T47D (cell line): ENCODE measurements at regions of chr17 and their contacts with region 1.

Region 1: DNA sequence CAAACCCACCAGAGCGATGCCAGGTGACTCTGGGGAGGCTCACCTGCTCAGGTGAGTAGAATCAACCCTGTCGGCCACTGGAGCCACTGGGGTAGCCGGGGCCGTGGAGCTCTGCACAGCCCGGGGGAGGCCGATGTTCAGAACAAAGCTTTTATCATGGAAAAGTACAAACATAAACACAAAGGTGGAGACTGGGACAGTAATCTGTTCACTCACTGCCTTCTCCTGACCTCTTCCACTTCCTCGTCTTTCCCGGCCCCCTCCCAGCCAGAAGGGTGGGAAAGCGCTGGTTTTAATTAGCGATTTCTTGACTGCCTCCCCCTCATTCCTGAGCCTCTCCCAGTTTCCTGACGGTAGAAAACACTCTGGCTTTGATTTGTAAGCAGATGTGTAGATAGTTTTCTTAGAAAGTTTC is 9.8 kb upstream of the TEX19 start:
- DNase-seq: no peak

Region 2: DNA sequence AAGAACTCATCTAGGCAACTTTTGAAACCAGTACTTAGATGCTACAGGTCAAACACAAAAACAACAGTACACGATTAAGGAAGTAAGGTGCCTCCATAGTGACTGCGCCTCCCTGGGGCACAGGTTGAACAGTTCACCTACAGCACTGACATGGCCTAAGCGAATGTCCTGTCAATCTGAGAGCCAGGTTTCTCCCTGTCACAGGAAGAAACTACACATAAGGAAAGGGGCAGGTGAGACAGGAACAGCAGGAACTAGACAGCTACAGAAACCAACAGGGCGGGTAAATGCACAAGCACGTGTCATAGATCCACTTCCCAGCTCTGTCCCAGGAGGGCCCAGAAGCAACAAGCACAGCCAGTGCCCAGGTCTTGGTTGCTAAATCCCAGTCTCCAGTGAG is 470.2 kb before region 1 on chr17:
- in situ Hi-C with region 1: no loop called
- DNase-seq: peak in 1 of 2 experiments; percentile 43

Region 3: DNA sequence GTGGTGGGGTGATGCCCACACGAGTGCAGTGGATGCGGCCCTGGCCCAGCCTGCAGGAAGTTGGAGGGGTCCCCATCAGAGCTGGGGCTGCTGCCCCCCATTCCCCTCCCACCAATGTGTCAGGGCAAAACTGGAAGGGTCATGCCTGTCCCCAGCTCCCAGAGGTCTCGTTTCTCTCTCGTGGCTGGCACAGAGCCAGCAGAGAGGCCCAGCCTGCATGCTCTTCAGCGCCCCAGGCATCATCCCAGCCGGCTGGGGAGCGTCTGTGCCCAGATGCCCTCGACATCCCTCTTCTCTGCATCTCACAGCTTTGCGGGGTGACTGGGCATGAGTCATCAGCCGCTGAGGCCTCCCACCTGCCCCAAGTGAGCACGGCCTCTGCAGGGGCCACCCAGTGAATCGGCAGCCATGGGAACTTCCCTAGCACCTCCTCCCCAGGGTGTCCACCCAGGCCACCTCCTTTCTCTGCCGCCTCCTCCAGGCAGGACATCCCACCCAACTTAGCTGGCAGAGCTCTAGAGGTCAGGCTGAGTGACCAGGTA is 66.0 kb before region 1 on chr17:
- in situ Hi-C with region 1: no loop called
- DNase-seq: peak in 1 of 2 experiments; percentile 49

Region 4: GRCh38 chr17:82418001-82418986 is 69.0 kb after region 1 on chr17 and contains the starts of genes HEXD and OGFOD3:
- in situ Hi-C with region 1: loop called (anchors 10 kb)
- DNase-seq: peak; percentile 95